Activated CD4-positive, alpha-beta T cell treated with anti-CD3 and anti-CD28 coated beads, Interleukin-2, amount 10 ng/mL, durations not matched to agents 24 days and 14 days (primary cell): ENCODE measurements at regions of chr19 and their contacts with region 1.

Region 1: GRCh38 chr19:47130591-47131227 is at the start of gene SAE1:
- DNase-seq: peak; percentile 98
- H3K4me3 Mint-ChIP-seq: peak within 1 kb of the TSS; percentile 98
- H3K27ac Mint-ChIP-seq: peak within 1 kb of the TSS; percentile 98
- H3K4me1 Mint-ChIP-seq: peaks cover 47% of the 10 kb centered on the region
- H3K27me3 Mint-ChIP-seq: peaks cover 2% of the 10 kb centered on the region
- total RNA-seq, gene SAE1: 147 and 151 TPM in 2 replicates

Region 2: DNA sequence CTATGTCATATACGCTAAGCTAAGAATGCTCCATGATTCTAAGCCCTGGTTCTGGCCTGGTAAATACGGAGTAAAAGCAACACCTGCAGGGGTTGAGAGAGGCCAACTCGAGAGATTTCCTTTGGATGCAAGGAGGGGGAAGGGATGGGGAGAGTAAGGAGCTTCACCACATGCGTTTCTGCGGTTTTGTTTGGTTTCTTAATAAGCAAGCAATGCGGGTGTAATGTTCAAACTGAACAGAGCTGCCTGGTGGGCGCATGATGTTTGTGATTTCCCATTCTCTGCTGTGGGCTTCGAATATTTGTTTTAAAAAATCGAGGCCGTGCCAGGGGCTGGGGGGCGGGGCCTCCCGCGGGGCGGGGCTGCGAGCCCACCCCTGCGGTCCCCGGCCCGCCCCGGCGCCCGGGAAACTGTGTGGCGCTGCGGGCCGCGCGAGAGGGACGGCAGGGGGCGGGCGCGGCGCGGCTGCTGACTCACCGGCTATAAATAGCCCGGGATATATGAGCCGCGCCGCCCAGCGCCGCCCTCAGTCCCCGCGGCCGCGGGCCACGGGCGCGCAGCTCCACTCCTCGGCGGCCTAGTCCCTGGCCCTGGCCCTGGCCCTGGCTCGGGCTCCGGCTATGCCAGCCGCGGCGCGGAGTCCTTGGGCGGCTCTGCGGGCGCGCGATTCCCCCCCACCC is 95.2 kb after region 1 on chr19:
- intact Hi-C with region 1: loop called (anchors 5 kb)
- DNase-seq: peak; percentile 96
- H3K4me3 Mint-ChIP-seq: peak overlapping the region; percentile 88
- H3K27ac Mint-ChIP-seq: peak overlapping the region; percentile 92
- H3K4me1 Mint-ChIP-seq: peaks cover 13% of the 10 kb centered on the region
- H3K27me3 Mint-ChIP-seq: no peaks in the 10 kb centered on the region